ENCODE measurements at regions of chr21 and their contacts with region 1.

Region 1: GRCh38 chr21:34603002-34603709 is 11.8 kb downstream of the RCAN1 start:
- DNase-seq: peak; percentile 57
- H3K4me3 ChIP-seq: no peak overlapping the region
- H3K27ac ChIP-seq: no peak overlapping the region
- H3K4me1 ChIP-seq: peaks cover 8% of the 10 kb centered on the region
- H3K27me3 ChIP-seq: no peaks in the 10 kb centered on the region
- CTCF ChIP-seq: peak; percentile 73 to 81

Region 2: GRCh38 chr21:34510148-34511142 is 92.7 kb before region 1 on chr21:
- CTCF ChIA-PET with region 1: interaction called, 14 read pairs
- dilution Hi-C with region 1: no loop called
- in situ Hi-C with region 1: no loop called
- intact Hi-C with region 1: loop called (anchors 1 kb)
- DNase-seq: peak; percentile 39
- H3K4me3 ChIP-seq: no peak overlapping the region
- H3K27ac ChIP-seq: no peak overlapping the region
- H3K4me1 ChIP-seq: no peaks in the 10 kb centered on the region
- H3K27me3 ChIP-seq: no peaks in the 10 kb centered on the region
- CTCF ChIP-seq: peak; percentile 75 to 90

Region 3: GRCh38 chr21:34526618-34527290 is 76.4 kb before region 1 on chr21:
- CTCF ChIA-PET with region 1: interaction called, 3 read pairs
- dilution Hi-C with region 1: no loop called
- in situ Hi-C with region 1: no loop called
- intact Hi-C with region 1: loop called (anchors 5 kb)
- DNase-seq: peak; percentile 98
- H3K4me3 ChIP-seq: peak overlapping the region; percentile 51 to 81 (median 65)
- H3K27ac ChIP-seq: peak overlapping the region; percentile 99
- H3K4me1 ChIP-seq: peaks cover 18% of the 10 kb centered on the region
- H3K27me3 ChIP-seq: no peaks in the 10 kb centered on the region
- CTCF ChIP-seq: no peak

Region 4: GRCh38 chr21:34545079-34545884 is 57.9 kb before region 1 on chr21:
- CTCF ChIA-PET with region 1: no interaction called
- dilution Hi-C with region 1: no loop called
- in situ Hi-C with region 1: no loop called
- intact Hi-C with region 1: loop called (anchors 1 kb)
- DNase-seq: peak; percentile 25
- H3K4me3 ChIP-seq: no peak overlapping the region
- H3K27ac ChIP-seq: peak overlapping the region; percentile 2
- H3K4me1 ChIP-seq: peaks cover 11% of the 10 kb centered on the region
- H3K27me3 ChIP-seq: no peaks in the 10 kb centered on the region
- CTCF ChIP-seq: no peak

Region 5: DNA sequence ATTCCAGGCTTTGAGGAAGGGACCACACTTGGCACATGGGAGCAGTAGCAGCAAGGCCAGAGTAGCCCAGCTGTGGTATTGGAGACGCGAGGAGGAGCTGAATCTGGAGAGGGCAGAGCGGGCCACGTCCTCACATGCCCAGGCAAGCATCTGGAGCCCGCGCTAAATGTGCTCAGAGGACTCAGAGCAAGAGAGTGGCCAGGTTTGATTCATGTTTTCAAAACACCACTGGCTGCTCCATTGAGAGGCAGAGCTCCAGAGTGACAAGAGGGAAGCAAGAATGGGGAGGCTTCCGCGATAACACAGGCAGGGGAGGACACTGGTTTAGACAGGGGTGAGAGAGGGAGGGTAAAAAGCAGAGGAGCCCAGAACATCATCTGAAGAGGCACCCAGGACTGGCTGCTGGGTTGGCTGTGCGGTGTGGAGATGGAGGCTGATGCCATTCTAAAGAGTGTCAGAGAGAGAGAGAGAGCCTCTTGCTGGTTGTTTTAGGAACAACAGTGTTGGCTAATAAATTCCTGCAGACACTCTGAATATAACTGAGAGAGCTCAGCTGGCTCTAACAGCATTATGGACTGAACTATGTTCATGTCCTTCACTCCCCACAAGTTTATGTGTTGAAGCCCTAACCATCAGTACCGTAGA is 20.5 kb before region 1 on chr21:
- CTCF ChIA-PET with region 1: interaction called, 5 read pairs
- dilution Hi-C with region 1: no loop called
- in situ Hi-C with region 1: no loop called
- intact Hi-C with region 1: loop called (anchors 1 kb)
- DNase-seq: peak; percentile 88
- H3K4me3 ChIP-seq: no peak overlapping the region
- H3K27ac ChIP-seq: peak overlapping the region; percentile 47
- H3K4me1 ChIP-seq: peaks cover 45% of the 10 kb centered on the region
- H3K27me3 ChIP-seq: no peaks in the 10 kb centered on the region
- CTCF ChIP-seq: peak; percentile 53 to 70

Region 6: DNA sequence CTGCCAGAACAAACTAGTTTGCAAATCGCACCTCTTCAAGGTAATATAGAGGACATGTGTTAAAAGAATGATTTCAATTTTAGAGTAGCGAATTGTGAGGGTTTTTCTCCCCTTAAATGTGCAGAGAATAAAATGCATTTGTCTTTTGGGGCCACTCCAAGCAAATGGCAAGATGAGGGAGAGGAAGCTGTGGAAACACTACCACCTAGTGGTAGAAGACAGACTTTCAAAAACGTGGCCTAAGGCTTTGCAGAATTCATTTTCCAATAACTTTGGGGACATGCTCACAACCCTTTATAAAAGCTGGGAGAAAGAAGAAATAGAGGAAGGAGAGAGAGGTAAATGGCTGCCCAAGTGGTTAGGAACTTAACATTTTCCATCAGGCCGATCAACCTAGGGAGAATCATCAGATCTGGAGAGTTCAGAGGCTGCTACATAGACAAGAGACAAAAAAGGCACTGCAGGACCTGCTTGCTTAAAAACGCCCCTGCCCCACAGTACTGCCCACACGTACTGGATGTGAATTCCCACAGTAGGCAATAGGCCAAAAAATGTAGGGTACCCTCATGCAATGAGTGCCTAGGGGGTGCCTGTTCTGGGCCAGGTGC is 27.5 kb after region 1 on chr21:
- CTCF ChIA-PET with region 1: interaction called, 3 read pairs
- dilution Hi-C with region 1: no loop called
- in situ Hi-C with region 1: no loop called
- intact Hi-C with region 1: loop called (anchors 1 kb)
- DNase-seq: peak; percentile 42
- H3K4me3 ChIP-seq: no peak overlapping the region
- H3K27ac ChIP-seq: no peak overlapping the region
- H3K4me1 ChIP-seq: no peaks in the 10 kb centered on the region
- H3K27me3 ChIP-seq: peaks cover 5% of the 10 kb centered on the region
- CTCF ChIP-seq: peak; percentile 71 to 81